Motor neuron (in vitro differentiated cells): ENCODE measurements at regions of chr17 and their contacts with region 1.

Region 1: DNA sequence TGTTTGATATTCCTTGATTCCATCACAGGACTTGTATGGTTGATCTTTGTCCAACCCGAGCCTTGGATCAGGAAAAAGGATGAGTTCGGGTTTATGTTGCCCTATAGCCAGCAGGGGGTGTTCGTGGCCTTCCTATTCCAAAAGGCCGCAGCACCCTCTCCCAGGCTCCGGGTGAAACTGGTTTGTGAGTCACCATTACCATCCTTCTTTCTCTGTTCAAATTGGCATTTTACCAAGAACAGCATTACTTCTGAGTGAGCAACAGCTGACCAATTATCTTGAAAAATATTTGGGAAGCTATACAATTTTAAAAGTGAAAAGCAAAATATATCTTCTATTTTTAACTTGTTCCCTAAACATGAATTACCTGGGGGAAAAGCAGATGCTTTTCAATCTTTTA is 24.3 kb upstream of the KRT20 start:
- ATAC-seq: peak; percentile 83 to 99 (median 98)
- H3K4me3 ChIP-seq: no peak overlapping the region
- H3K27ac ChIP-seq: no peak overlapping the region
- H3K4me1 ChIP-seq: peaks cover 4 to 17% of the 10 kb centered on the region in 2 donors

Region 2: DNA sequence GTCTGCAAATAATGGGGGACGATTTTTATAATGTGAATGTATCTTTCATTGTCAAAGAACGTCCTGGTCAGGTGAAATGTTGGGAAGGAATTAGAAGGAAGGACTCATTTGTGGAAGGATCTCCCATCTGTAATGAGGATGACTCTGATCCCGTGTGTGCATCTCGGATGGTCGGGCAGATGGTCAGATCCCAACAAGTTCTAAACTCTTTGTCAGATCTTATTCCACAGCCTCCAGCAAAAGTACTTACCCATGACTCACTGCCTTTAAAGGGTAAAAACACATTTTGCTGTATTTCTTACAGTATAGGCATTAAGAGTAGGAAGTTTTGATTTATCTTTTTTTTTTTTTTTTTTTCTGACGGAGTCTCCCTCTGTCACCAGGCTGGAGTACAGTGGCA is 189.1 kb after region 1 on chr17:
- in situ Hi-C with region 1: no loop called
- ATAC-seq: no peak
- H3K4me3 ChIP-seq: no peak overlapping the region
- H3K27ac ChIP-seq: no peak overlapping the region
- H3K4me1 ChIP-seq: no peaks in the 10 kb centered on the region

Region 3: GRCh38 chr17:41167561-41167960 is 258.2 kb after region 1 on chr17:
- in situ Hi-C with region 1: no loop called
- ATAC-seq: no peak
- H3K4me3 ChIP-seq: no peak overlapping the region
- H3K27ac ChIP-seq: no peak overlapping the region
- H3K4me1 ChIP-seq: no peaks in the 10 kb centered on the region

Region 4: GRCh38 chr17:41254861-41255260 is 345.5 kb after region 1 on chr17:
- in situ Hi-C with region 1: no loop called
- ATAC-seq: no peak
- H3K4me3 ChIP-seq: no peak overlapping the region
- H3K27ac ChIP-seq: no peak overlapping the region
- H3K4me1 ChIP-seq: no peaks in the 10 kb centered on the region

Region 5: GRCh38 chr17:41322094-41322902 is 412.9 kb after region 1 on chr17:
- in situ Hi-C with region 1: loop called in 3 of 9 experiments (anchors 10 to 25 kb)
- ATAC-seq: peak in 4 of 8 experiments; percentile 46 to 83 (median 68)
- H3K4me3 ChIP-seq: no peak overlapping the region
- H3K27ac ChIP-seq: no peak overlapping the region
- H3K4me1 ChIP-seq: no peaks in the 10 kb centered on the region

Region 6: GRCh38 chr17:41496820-41497408 is 587.6 kb after region 1 on chr17:
- in situ Hi-C with region 1: loop called in 2 of 9 experiments (anchors 25 kb)
- ATAC-seq: peak; percentile 19 to 100 (median 77)
- H3K4me3 ChIP-seq: no peak overlapping the region
- H3K27ac ChIP-seq: no peak overlapping the region
- H3K4me1 ChIP-seq: peaks cover 2 to 15% of the 10 kb centered on the region in 2 donors

Region 7: GRCh38 chr17:41549596-41550039 is 640.3 kb after region 1 on chr17:
- in situ Hi-C with region 1: loop called in 1 of 9 experiments (anchors 25 kb)
- ATAC-seq: no peak
- H3K4me3 ChIP-seq: no peak overlapping the region
- H3K27ac ChIP-seq: no peak overlapping the region
- H3K4me1 ChIP-seq: peaks cover 10 to 14% of the 10 kb centered on the region in 2 donors

Region 8: GRCh38 chr17:41655611-41656351 is 746.4 kb after region 1 on chr17:
- in situ Hi-C with region 1: loop called in 8 of 9 experiments (anchors 5 to 25 kb)
- ATAC-seq: peak; percentile 43 to 75 (median 64)
- H3K4me3 ChIP-seq: no peak overlapping the region
- H3K27ac ChIP-seq: no peak overlapping the region
- H3K4me1 ChIP-seq: peaks cover 10 to 13% of the 10 kb centered on the region in 2 donors